ENCODE measurements at regions of chr17 and their contacts with region 1.

Region 1: GRCh38 chr17:32253117-32253611 is 12.5 kb upstream of the RHBDL3 start:
- DNase-seq: peak; percentile 89
- H3K4me3 ChIP-seq: no peak overlapping the region
- H3K27ac ChIP-seq: no peak overlapping the region
- H3K4me1 ChIP-seq: peaks cover 0 to 5% (median 0%) of the 10 kb centered on the region in 4 donors
- H3K27me3 ChIP-seq: no peaks in the 10 kb centered on the region
- CTCF ChIP-seq: peak; percentile 90 to 99 (median 92)
- EP300 ChIP-seq: no peak
- POLR2A ChIP-seq: no peak

Region 2: GRCh38 chr17:32222620-32223019 is 30.5 kb before region 1 on chr17:
- intact Hi-C with region 1: no loop called
- DNase-seq: no peak
- H3K4me3 ChIP-seq: no peak overlapping the region
- H3K27ac ChIP-seq: no peak overlapping the region
- H3K4me1 ChIP-seq: no peaks in the 10 kb centered on the region
- H3K27me3 ChIP-seq: no peaks in the 10 kb centered on the region
- CTCF ChIP-seq: no peak
- EP300 ChIP-seq: no peak
- POLR2A ChIP-seq: no peak

Region 3: GRCh38 chr17:32277281-32277680 is 24.1 kb after region 1 on chr17:
- intact Hi-C with region 1: no loop called
- DNase-seq: no peak
- H3K4me3 ChIP-seq: no peak overlapping the region
- H3K27ac ChIP-seq: no peak overlapping the region
- H3K4me1 ChIP-seq: peaks cover 0 to 4% (median 0%) of the 10 kb centered on the region in 4 donors
- H3K27me3 ChIP-seq: peaks cover 0 to 32% (median 0%) of the 10 kb centered on the region in 3 donors
- CTCF ChIP-seq: no peak
- EP300 ChIP-seq: no peak
- POLR2A ChIP-seq: no peak

Region 4: GRCh38 chr17:32319548-32319905 is 66.4 kb after region 1 on chr17:
- intact Hi-C with region 1: loop called (anchors 1 kb)
- DNase-seq: peak; percentile 84
- H3K4me3 ChIP-seq: no peak overlapping the region
- H3K27ac ChIP-seq: no peak overlapping the region
- H3K4me1 ChIP-seq: peaks cover 0 to 10% (median 7%) of the 10 kb centered on the region in 4 donors
- H3K27me3 ChIP-seq: no peaks in the 10 kb centered on the region
- CTCF ChIP-seq: peak; percentile 84 to 93 (median 89)
- EP300 ChIP-seq: no peak
- POLR2A ChIP-seq: no peak

Measured in sigmoid colon (tissue), 7 donors.